Heart left ventricle (tissue), 16 donors: ENCODE measurements at regions of chr6 and their contacts with region 1.

Region 1: GRCh38 chr6:31619805-31620585 is 520 bp upstream of the PRRC2A start:
- DNase-seq: peak; percentile 97 to 99 (median 98)
- ATAC-seq: peak; percentile 91 to 97 (median 96)
- H3K4me3 ChIP-seq: peak overlapping the region in 11 of 12 donors; percentile 60 to 97 (median 87)
- H3K27ac ChIP-seq: peak overlapping the region; percentile 86 to 99 (median 96)
- H3K4me1 ChIP-seq: peaks cover 0 to 32% (median 21%) of the 10 kb centered on the region in 12 donors
- H3K27me3 ChIP-seq: no peaks in the 10 kb centered on the region
- CTCF ChIP-seq: no peak
- POLR2A ChIP-seq: peak; percentile 52 to 87

Region 2: DNA sequence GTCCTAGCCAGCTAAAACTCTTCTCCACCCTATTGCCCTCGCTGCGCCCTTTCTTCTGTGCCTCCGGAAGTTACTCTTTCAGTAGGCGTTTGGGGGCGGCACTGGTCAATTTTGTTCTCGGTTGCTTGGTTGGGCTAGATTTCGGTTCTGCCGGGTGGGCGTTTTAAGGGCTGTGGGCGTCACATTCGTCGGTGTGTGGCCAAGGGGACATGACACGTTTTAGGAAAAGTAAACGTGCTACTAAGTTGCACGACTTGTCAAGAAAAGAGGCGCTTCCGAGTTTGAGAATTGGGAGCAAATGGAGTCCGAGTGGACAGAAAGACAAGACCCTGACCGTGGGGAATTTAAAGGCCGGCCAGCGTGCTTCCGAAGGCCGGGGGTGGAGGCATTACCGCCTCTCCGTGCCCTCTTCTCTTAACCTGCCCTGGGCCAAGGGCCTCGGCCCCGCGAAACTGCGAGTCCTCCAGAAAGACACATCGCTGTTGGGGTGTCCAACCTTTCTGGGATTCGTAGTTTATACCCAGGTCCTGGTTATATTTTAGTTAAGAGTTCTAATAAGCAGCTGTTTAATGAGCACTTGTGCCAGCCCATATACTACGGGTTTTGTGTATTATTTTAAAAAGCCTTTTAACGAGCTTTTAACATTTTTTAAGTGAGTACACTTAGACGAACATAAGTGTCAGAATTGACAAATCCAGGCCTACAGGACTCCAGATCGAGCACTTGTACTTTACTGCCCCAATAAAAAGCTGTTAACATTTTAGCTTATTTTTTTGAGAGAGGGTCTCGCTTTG is 33.1 kb after region 1 on chr6:
- intact Hi-C with region 1: loop called in 4 of 10 experiments (anchors 1 to 5 kb)
- DNase-seq: peak; percentile 87 to 92 (median 90)
- ATAC-seq: peak; percentile 73 to 83 (median 80)
- H3K4me3 ChIP-seq: peak overlapping the region; percentile 62 to 92 (median 79)
- H3K27ac ChIP-seq: peak overlapping the region; percentile 94 to 99 (median 98)
- H3K4me1 ChIP-seq: peaks cover 2 to 42% (median 26%) of the 10 kb centered on the region in 12 donors
- H3K27me3 ChIP-seq: no peaks in the 10 kb centered on the region
- CTCF ChIP-seq: peak in 3 of 12 donors; percentile 5 to 31 (median 28)
- POLR2A ChIP-seq: peak; percentile 31 to 70

Region 3: GRCh38 chr6:31659649-31660380 is 39.8 kb after region 1 on chr6:
- intact Hi-C with region 1: loop called in 2 of 10 experiments (anchors 1 to 5 kb)
- DNase-seq: no peak
- ATAC-seq: peak in 1 of 4 donors; percentile 5
- H3K4me3 ChIP-seq: peak overlapping the region; percentile 65 to 98 (median 83)
- H3K27ac ChIP-seq: peak overlapping the region; percentile 84 to 95 (median 93)
- H3K4me1 ChIP-seq: peaks cover 24 to 66% (median 49%) of the 10 kb centered on the region in 12 donors
- H3K27me3 ChIP-seq: no peaks in the 10 kb centered on the region
- CTCF ChIP-seq: no peak
- POLR2A ChIP-seq: no peak

Region 4: GRCh38 chr6:31665501-31666336 is 45.7 kb after region 1 on chr6 and contains the start of gene CSNK2B:
- intact Hi-C with region 1: loop called in 1 of 10 experiments (anchors 1 kb)
- DNase-seq: peak; percentile 99
- ATAC-seq: peak; percentile 90 to 94 (median 92)
- H3K4me3 ChIP-seq: peak within 1 kb of the TSS; percentile 64 to 95 (median 83)
- H3K27ac ChIP-seq: peak within 1 kb of the TSS; percentile 83 to 97 (median 95)
- H3K4me1 ChIP-seq: peaks cover 9 to 60% (median 38%) of the 10 kb centered on the region in 12 donors
- H3K27me3 ChIP-seq: no peaks in the 10 kb centered on the region
- CTCF ChIP-seq: peak in 4 of 12 donors; percentile 18 to 41 (median 34)
- POLR2A ChIP-seq: peak in 1 of 2 donors; percentile 56
- total RNA-seq, gene CSNK2B: 111 to 323 (median 116) TPM